Heart left ventricle (tissue), 16 donors: ENCODE measurements at regions of chr5 and their contacts with region 1.

Region 1: DNA sequence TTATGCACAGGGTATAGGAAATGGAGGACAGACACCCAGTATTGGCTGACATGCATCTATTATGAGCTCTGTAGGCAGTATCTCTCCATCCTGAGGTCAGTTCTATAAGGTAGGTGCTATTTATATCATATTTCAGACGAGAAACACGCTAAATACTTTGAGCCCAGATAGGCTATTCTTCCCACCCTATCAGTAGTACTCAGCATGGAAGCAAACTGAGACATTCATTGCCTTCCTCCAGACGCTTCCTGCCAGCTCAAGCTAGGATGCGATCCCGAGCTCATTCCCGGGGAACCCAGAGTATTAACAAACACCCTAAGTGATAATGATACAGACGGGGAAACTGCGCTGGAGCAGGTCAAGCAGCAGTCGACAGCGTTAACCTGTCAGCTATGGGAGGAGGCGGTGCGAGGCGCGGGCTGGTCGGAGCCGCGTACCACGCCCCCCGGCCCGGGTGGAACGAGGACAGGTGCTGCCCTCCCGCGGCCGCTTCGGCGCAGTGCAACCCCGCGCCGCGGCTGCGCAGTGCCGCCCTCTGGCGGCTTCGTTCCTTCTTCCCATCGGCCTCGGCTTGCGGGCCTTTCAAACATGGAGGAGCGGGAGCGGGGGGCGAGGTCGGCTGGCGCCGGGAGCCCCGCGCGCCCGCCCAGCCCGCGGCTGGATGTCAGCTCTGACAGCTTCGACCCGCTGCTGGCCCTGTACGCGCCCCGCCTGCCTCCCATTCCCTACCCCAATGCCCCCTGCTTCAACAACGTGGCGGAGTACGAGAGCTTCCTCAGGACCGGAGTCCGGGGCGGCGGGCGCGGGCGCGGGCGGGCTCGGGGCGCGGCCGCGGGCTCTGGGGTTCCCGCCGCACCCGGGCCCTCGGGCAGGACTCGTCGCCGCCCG is at the start of gene LSM11:
- DNase-seq: peak; percentile 85 to 94 (median 88)
- ATAC-seq: peak; percentile 88 to 96 (median 95)
- H3K4me3 ChIP-seq: peak within 1 kb of the TSS; percentile 66 to 97 (median 84)
- H3K27ac ChIP-seq: peak within 1 kb of the TSS in 7 of 12 donors; percentile 28 to 78 (median 59)
- H3K4me1 ChIP-seq: peaks cover 0 to 19% (median 10%) of the 10 kb centered on the region in 12 donors
- H3K27me3 ChIP-seq: no peaks in the 10 kb centered on the region
- CTCF ChIP-seq: peak; percentile 99 to 100 (median 100)
- POLR2A ChIP-seq: peak in 1 of 2 donors; percentile 39
- total RNA-seq, gene LSM11: 0.97 to 3.1 (median 1.9) TPM

Region 2: DNA sequence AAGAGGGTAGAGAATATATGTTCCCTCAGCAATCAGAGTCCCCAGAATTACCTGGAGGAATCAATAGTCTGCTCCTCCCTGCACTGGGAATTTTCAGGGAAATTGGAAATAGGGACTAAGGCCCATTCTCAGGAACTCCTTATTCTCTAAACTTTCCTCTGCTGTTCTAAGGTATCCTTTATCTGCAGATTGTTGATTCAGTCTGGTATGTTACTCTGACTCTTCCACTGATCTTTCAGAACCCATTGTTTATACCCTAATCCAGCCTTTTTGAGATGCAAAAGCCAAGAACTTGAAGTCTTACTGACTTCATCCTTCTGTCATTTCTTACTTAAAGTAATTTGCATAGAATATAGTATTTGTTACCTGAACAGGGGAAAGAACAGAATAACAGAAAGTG is 1036.8 kb before region 1 on chr5:
- intact Hi-C with region 1: no loop called
- DNase-seq: no peak
- ATAC-seq: no peak
- H3K4me3 ChIP-seq: no peak overlapping the region
- H3K27ac ChIP-seq: no peak overlapping the region
- H3K4me1 ChIP-seq: peaks cover 0 to 22% (median 0%) of the 10 kb centered on the region in 12 donors
- H3K27me3 ChIP-seq: no peaks in the 10 kb centered on the region
- CTCF ChIP-seq: no peak
- POLR2A ChIP-seq: no peak

Region 3: GRCh38 chr5:157142317-157143126 is 600.9 kb before region 1 on chr5 and contains the start of gene MED7:
- intact Hi-C with region 1: loop called in 1 of 10 experiments (anchors 10 kb)
- DNase-seq: peak; percentile 92 to 97 (median 95)
- ATAC-seq: peak; percentile 98 to 99 (median 99)
- H3K4me3 ChIP-seq: peak within 1 kb of the TSS; percentile 65 to 95 (median 88)
- H3K27ac ChIP-seq: peak within 1 kb of the TSS; percentile 80 to 95 (median 90)
- H3K4me1 ChIP-seq: peaks cover 0 to 21% (median 9%) of the 10 kb centered on the region in 12 donors
- H3K27me3 ChIP-seq: no peaks in the 10 kb centered on the region
- CTCF ChIP-seq: no peak
- POLR2A ChIP-seq: peak; percentile 59 to 85
- total RNA-seq, gene MED7: 6.9 to 11.0 (median 9.6) TPM

Region 4: DNA sequence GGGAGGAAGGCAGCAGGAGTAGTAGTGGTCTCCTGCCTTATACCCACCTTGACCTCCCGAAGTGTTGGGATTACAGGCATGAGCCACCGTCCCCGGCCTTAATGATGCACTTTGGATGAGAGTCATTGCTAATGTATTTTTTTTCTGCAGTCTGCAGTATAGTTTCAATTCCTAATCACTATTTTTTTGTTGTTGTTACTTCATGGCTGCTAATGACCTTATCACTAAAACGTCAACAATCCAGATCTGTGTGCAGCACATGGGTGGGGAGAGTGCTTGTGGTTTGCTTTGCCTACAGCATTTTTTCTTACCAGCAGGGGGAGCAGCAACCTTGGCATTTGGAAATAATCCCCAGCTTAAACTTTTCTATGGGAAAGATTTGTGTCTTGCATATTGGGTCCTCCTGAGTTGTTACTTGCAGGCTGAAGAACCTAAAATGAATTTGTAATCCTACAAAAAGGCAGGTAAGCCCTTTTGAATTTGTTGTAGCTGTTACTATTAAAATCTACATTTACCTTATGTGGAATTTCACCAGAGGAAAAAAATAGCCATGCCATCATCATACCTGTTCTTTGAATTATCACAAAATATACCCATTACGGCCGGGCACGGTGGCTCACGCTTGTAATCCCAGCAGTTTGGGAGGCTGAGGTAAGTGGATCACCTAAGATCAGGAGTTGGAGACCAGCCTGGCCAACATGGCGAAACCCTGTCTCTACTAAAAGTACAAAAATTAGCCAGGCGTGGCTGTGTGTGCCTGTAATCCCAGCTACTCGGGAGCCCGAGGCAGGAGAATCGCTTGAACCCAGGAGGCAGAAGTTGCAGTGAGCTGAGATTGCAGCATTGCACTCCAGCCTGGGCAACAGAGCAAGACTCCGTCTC is 594.4 kb before region 1 on chr5:
- intact Hi-C with region 1: loop called in 2 of 10 experiments (anchors 2 to 10 kb)
- DNase-seq: peak in 3 of 5 donors; percentile 46 to 62 (median 48)
- ATAC-seq: peak in 3 of 4 donors; percentile 71 to 79 (median 74)
- H3K4me3 ChIP-seq: no peak overlapping the region
- H3K27ac ChIP-seq: no peak overlapping the region
- H3K4me1 ChIP-seq: peaks cover 0 to 13% (median 3%) of the 10 kb centered on the region in 12 donors
- H3K27me3 ChIP-seq: no peaks in the 10 kb centered on the region
- CTCF ChIP-seq: peak; percentile 72 to 95 (median 87)
- POLR2A ChIP-seq: no peak

Region 5: GRCh38 chr5:157328277-157328912 is 415.0 kb before region 1 on chr5:
- intact Hi-C with region 1: loop called in 6 of 10 experiments (anchors 1 to 10 kb)
- DNase-seq: peak in 4 of 5 donors; percentile 59 to 68 (median 60)
- ATAC-seq: peak; percentile 86 to 97 (median 94)
- H3K4me3 ChIP-seq: peak overlapping the region in 9 of 12 donors; percentile 4 to 37 (median 12)
- H3K27ac ChIP-seq: peak overlapping the region in 1 of 12 donors; percentile 24
- H3K4me1 ChIP-seq: peaks cover 0 to 13% (median 0%) of the 10 kb centered on the region in 12 donors
- H3K27me3 ChIP-seq: no peaks in the 10 kb centered on the region
- CTCF ChIP-seq: peak; percentile 80 to 94 (median 90)
- POLR2A ChIP-seq: no peak

Region 6: DNA sequence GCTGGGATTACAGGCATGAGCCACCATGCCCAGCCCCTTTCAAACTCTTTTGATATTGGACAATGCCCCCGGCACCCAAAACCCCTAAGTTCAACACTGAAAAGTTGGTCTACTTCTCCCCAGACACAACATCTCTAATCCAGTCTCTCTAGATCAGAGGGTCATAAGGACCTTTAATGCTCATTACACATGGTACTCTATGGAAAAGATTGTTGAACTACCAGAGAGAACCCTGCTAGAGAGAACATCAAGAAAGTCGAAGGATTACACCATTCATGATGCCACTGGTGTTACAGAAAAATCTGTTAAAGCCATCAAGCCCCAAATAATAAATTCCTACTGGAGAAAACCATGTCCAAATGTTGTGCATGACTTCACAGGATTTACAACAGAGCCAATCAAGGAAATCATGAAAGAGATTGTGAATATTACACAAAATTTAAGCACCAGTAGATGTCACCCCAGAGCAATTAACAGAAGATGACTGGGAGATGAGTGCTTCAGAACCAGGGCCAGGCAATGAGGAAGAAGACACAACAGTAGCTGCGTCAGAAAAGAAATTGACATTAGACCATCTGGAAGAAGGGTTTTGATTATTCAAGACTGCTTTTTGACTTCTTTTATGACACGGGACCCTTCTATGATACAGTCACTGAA is 311.7 kb before region 1 on chr5:
- intact Hi-C with region 1: loop called in 1 of 10 experiments (anchors 10 kb)
- DNase-seq: peak in 2 of 5 donors; percentile 24 to 30
- ATAC-seq: peak in 3 of 4 donors; percentile 63 to 87 (median 80)
- H3K4me3 ChIP-seq: no peak overlapping the region
- H3K27ac ChIP-seq: no peak overlapping the region
- H3K4me1 ChIP-seq: peaks cover 0 to 5% (median 0%) of the 10 kb centered on the region in 12 donors
- H3K27me3 ChIP-seq: no peaks in the 10 kb centered on the region
- CTCF ChIP-seq: peak; percentile 41 to 76 (median 60)
- POLR2A ChIP-seq: no peak

Region 7: DNA sequence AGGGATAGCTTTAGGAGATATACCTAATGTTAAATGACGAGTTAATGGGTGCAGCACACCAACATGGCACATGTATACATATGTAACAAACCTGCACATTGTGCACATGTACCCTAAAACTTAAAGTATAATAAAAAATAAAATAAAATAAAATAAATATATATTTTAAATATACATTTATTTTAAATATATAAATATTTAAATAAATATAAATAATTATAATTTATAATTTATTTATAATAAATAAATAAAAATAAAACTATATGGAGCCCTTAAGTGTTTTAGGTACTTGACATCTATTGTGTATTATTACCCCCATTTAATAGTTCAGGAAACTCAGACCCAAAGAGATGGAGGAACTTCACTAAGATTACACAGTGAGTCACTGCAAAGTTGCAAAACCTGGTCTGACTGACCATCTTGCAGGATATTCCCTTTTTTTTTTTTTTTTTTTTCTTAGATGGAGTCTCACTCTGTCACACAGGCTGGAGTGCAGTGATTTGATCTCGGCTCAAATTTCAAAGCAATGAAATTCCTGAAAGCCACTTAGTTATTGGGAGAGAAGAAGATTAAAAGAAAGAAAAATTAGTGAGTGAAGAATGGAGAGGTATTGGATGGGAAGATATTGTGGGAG is 77.8 kb before region 1 on chr5:
- intact Hi-C with region 1: loop called in 1 of 10 experiments (anchors 5 kb)
- DNase-seq: no peak
- ATAC-seq: no peak
- H3K4me3 ChIP-seq: no peak overlapping the region
- H3K27ac ChIP-seq: no peak overlapping the region
- H3K4me1 ChIP-seq: peaks cover 0 to 5% (median under 1%) of the 10 kb centered on the region in 12 donors
- H3K27me3 ChIP-seq: peaks cover 0 to 6% (median 0%) of the 10 kb centered on the region in 9 donors
- CTCF ChIP-seq: no peak
- POLR2A ChIP-seq: no peak